Natural killer cell (primary cell): ENCODE measurements at regions of chr3 and their contacts with region 1.

Region 1: GRCh38 chr3:127574880-127575878 is 15.4 kb downstream of the TPRA1 start:
- DNase-seq: peak; percentile 76 to 93
- ATAC-seq: peak; percentile 94 to 100 (median 97)
- H3K4me3 ChIP-seq: no peak overlapping the region
- H3K4me3 Mint-ChIP-seq: peak overlapping the region; percentile 31
- H3K27ac ChIP-seq: no peak overlapping the region
- H3K27ac Mint-ChIP-seq: peak overlapping the region in 1 of 2 donors; percentile 61
- H3K4me1 ChIP-seq: peaks cover 22% of the 10 kb centered on the region
- H3K4me1 Mint-ChIP-seq: peaks cover 12 to 37% of the 10 kb centered on the region in 2 donors
- H3K27me3 ChIP-seq: no peaks in the 10 kb centered on the region
- H3K27me3 Mint-ChIP-seq: no peaks in the 10 kb centered on the region
- CTCF ChIP-seq: peak; percentile 86

Region 2: GRCh38 chr3:127625821-127626220 is 50.6 kb after region 1 on chr3:
- intact Hi-C with region 1: no loop called
- DNase-seq: no peak
- ATAC-seq: no peak
- H3K4me3 ChIP-seq: no peak overlapping the region
- H3K4me3 Mint-ChIP-seq: no peak overlapping the region
- H3K27ac ChIP-seq: no peak overlapping the region
- H3K27ac Mint-ChIP-seq: peak overlapping the region in 1 of 2 donors; percentile 57
- H3K4me1 ChIP-seq: peaks cover 27% of the 10 kb centered on the region
- H3K4me1 Mint-ChIP-seq: peaks cover 46 to 50% of the 10 kb centered on the region in 2 donors
- H3K27me3 ChIP-seq: no peaks in the 10 kb centered on the region
- H3K27me3 Mint-ChIP-seq: peaks cover 6 to 10% of the 10 kb centered on the region in 2 donors
- CTCF ChIP-seq: no peak

Region 3: DNA sequence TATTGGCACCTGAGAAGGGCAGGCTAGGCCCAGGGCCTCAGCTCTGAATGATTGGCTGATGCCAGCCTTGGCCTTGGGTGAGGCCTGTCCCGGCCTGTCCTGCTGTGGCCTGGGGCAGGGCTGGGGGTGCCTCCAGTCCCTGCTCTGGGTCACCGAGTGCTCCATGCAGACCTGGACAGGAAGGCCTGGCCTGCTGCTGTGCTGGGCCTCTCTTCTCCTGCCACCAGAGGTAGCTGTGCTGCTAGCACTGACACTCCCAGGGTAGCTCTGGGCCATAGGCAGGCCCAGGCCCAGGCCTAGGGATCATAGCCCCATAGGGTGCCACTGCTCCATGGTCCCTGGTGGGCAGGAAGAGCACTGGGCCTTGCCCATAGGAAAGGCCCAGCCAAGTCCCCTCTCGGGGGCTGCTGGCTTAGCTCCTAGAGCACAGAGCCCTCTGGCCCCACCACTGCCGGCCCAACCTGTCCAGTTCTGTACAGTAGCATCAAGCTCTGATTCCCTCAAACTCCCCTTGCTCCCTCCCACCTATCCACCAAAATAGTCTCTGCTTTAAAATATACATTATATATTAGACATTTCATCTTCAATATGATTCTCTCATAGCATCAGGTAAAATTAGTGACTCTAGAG is 115.8 kb after region 1 on chr3:
- intact Hi-C with region 1: loop called (anchors 5 kb)
- DNase-seq: no peak
- ATAC-seq: no peak
- H3K4me3 ChIP-seq: no peak overlapping the region
- H3K4me3 Mint-ChIP-seq: no peak overlapping the region
- H3K27ac ChIP-seq: no peak overlapping the region
- H3K27ac Mint-ChIP-seq: no peak overlapping the region
- H3K4me1 ChIP-seq: no peaks in the 10 kb centered on the region
- H3K4me1 Mint-ChIP-seq: no peaks in the 10 kb centered on the region
- H3K27me3 ChIP-seq: no peaks in the 10 kb centered on the region
- H3K27me3 Mint-ChIP-seq: no peaks in the 10 kb centered on the region
- CTCF ChIP-seq: no peak

Region 4: DNA sequence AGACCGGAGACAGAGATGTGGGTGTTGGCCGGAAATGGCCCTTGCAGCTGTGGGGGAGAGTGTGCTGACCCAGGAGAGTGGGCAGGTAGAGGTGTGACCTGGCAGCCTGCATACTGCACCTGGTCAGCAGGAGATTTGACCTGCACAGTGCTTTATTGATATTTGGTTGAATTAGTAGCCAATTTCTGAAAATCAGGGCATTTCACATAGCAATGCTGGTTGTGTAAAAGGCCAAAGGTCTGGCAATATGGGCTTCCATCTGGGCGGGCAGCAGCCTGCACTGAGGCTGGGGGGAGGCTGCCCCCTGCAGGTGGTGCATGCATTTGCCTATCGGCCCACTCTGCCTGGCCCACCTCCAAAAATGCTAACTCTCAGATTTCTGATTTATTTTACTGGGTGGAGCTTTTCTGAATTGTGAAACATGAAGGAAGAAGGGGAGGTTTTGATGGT is 256.6 kb after region 1 on chr3:
- intact Hi-C with region 1: loop called (anchors 1 kb)
- DNase-seq: peak; percentile 27 to 45
- ATAC-seq: peak; percentile 60 to 71 (median 69)
- H3K4me3 ChIP-seq: no peak overlapping the region
- H3K4me3 Mint-ChIP-seq: no peak overlapping the region
- H3K27ac ChIP-seq: no peak overlapping the region
- H3K27ac Mint-ChIP-seq: no peak overlapping the region
- H3K4me1 ChIP-seq: no peaks in the 10 kb centered on the region
- H3K4me1 Mint-ChIP-seq: no peaks in the 10 kb centered on the region
- H3K27me3 ChIP-seq: no peaks in the 10 kb centered on the region
- H3K27me3 Mint-ChIP-seq: peaks cover 0 to under 1% of the 10 kb centered on the region in 2 donors
- CTCF ChIP-seq: peak; percentile 66

Region 5: GRCh38 chr3:127970966-127971592 is 395.9 kb after region 1 on chr3:
- intact Hi-C with region 1: loop called (anchors 2 kb)
- DNase-seq: peak in 1 of 2 donors; percentile 59
- ATAC-seq: peak in 1 of 3 donors; percentile 45
- H3K4me3 ChIP-seq: no peak overlapping the region
- H3K4me3 Mint-ChIP-seq: no peak overlapping the region
- H3K27ac ChIP-seq: no peak overlapping the region
- H3K27ac Mint-ChIP-seq: no peak overlapping the region
- H3K4me1 ChIP-seq: no peaks in the 10 kb centered on the region
- H3K4me1 Mint-ChIP-seq: no peaks in the 10 kb centered on the region
- H3K27me3 ChIP-seq: peaks cover 2% of the 10 kb centered on the region
- H3K27me3 Mint-ChIP-seq: peaks cover 16 to 30% of the 10 kb centered on the region in 2 donors
- CTCF ChIP-seq: peak; percentile 4